Activated CD8-positive, alpha-beta memory T cell treated with anti-CD3 and anti-CD28 coated beads, Interleukin-2, amount 10 ng/mL, durations not matched to agents 7 days and 5 days (primary cell): ENCODE measurements at regions of chr2 and their contacts with region 1.

Region 1: DNA sequence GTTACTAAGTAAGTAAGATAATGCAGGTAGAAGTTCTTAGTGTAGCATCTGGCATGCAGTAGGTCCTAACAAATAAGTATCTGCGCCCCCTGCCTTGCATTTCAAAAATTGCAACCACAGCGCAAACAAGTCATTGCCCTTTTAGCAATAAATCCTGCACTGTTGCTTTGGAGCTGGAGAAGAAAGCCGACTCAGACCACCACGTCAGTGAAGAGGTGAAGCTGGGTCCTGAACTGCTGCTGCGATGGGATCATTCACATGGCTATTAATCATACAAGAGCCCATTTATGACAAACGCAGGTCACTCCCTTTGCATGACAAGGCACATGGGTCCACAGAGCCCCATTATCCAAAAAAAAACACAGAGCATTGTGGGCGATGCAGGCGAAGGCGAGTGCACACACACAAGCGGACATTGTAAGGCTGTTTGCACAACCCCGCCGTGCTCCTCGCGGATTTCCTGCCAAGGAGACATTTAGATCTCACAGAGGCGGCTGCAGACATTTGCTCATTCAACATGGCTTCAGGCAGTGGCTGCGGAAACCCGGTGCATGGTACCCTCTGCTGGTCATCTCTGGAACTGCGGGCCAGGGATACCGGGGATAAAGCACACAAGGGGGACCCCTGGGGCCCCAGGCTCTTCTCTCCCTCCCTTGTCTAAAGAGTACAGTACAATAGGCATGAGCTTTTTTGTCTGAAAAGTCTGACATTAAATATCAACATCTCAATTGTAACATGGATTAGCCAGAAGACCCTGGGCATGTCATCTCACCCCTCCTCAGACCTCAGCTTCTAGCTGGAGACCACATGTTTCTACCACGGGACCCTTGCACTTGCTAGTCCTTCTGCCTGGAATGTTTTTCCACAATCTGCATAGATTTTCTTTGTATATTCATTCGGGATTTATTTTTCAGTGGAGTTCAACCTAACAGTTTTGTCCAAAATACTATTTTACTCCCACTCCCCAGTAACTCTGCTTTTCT is 56.7 kb downstream of the CYRIA start:
- DNase-seq: peak; percentile 88
- ATAC-seq: peak; percentile 92
- H3K4me3 Mint-ChIP-seq: peak overlapping the region; percentile 72
- H3K27ac Mint-ChIP-seq: peak overlapping the region; percentile 69
- H3K4me1 Mint-ChIP-seq: peaks cover 4% of the 10 kb centered on the region
- H3K27me3 Mint-ChIP-seq: no peaks in the 10 kb centered on the region

Region 2: GRCh38 chr2:15939854-15940660 is 668.9 kb before region 1 on chr2 and contains the start of gene MYCN:
- CTCF ChIA-PET with region 1: interaction called, 12 read pairs
- DNase-seq: no peak
- ATAC-seq: no peak
- H3K4me3 Mint-ChIP-seq: no peak within 1 kb of the TSS
- H3K27ac Mint-ChIP-seq: no peak within 1 kb of the TSS
- H3K4me1 Mint-ChIP-seq: no peaks in the 10 kb centered on the region
- H3K27me3 Mint-ChIP-seq: peaks cover 71% of the 10 kb centered on the region
- total RNA-seq, gene MYCN: not detected

Region 3: GRCh38 chr2:16756831-16757644 is 148.1 kb after region 1 on chr2:
- CTCF ChIA-PET with region 1: interaction called, 10 read pairs
- DNase-seq: peak; percentile 64
- ATAC-seq: peak; percentile 63
- H3K4me3 Mint-ChIP-seq: no peak overlapping the region
- H3K27ac Mint-ChIP-seq: no peak overlapping the region
- H3K4me1 Mint-ChIP-seq: no peaks in the 10 kb centered on the region
- H3K27me3 Mint-ChIP-seq: no peaks in the 10 kb centered on the region

Region 4: GRCh38 chr2:17148407-17149145 is 539.6 kb after region 1 on chr2:
- CTCF ChIA-PET with region 1: no interaction called
- DNase-seq: no peak
- ATAC-seq: no peak
- H3K4me3 Mint-ChIP-seq: no peak overlapping the region
- H3K27ac Mint-ChIP-seq: no peak overlapping the region
- H3K4me1 Mint-ChIP-seq: no peaks in the 10 kb centered on the region
- H3K27me3 Mint-ChIP-seq: no peaks in the 10 kb centered on the region